ENCODE measurements at regions of chr3 and their contacts with region 1.

Region 1: GRCh38 chr3:131033480-131034080 is 6.9 kb downstream of the NEK11 start:
- DNase-seq: peak in 5 of 14 experiments; percentile 9 to 77 (median 70)
- ATAC-seq: peak; percentile 74
- H3K4me3 ChIP-seq: no peak overlapping the region
- H3K4me3 Mint-ChIP-seq: no peak overlapping the region
- H3K27ac ChIP-seq: no peak overlapping the region
- H3K27ac Mint-ChIP-seq: no peak overlapping the region
- H3K4me1 ChIP-seq: no peaks in the 10 kb centered on the region
- H3K4me1 Mint-ChIP-seq: no peaks in the 10 kb centered on the region
- H3K27me3 ChIP-seq: no peaks in the 10 kb centered on the region
- H3K27me3 Mint-ChIP-seq: no peaks in the 10 kb centered on the region
- CTCF ChIP-seq: peak; percentile 68

Region 2: DNA sequence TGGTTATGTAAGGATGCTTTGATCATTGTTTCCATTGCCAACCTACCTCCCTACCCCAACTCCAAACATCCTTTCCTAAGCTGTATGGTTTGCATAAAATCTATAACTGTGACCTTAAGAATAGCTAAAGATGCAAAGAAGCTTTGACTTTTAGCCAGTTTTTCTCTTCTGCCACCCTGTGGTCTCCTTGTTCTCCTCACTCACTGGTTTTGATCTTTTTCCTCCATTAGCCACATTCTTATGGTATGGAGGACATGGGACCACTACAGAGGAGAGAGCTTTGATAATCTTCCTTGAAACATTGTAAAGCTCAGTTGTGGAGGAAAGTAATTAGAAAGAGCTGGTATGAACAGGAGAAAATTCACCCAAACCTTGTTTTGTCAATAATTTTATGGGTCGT is 109.0 kb after region 1 on chr3:
- CTCF ChIA-PET with region 1: no interaction called
- POLR2A ChIA-PET with region 1: no interaction called
- intact Hi-C with region 1: loop called in 1 of 2 experiments (anchors 5 kb)
- DNase-seq: no peak
- ATAC-seq: no peak
- H3K4me3 ChIP-seq: no peak overlapping the region
- H3K4me3 Mint-ChIP-seq: no peak overlapping the region
- H3K27ac ChIP-seq: no peak overlapping the region
- H3K27ac Mint-ChIP-seq: no peak overlapping the region
- H3K4me1 ChIP-seq: no peaks in the 10 kb centered on the region
- H3K4me1 Mint-ChIP-seq: no peaks in the 10 kb centered on the region
- H3K27me3 ChIP-seq: no peaks in the 10 kb centered on the region
- H3K27me3 Mint-ChIP-seq: no peaks in the 10 kb centered on the region
- CTCF ChIP-seq: no peak

Region 3: GRCh38 chr3:131794766-131795388 is 761.3 kb after region 1 on chr3:
- CTCF ChIA-PET with region 1: no interaction called
- POLR2A ChIA-PET with region 1: no interaction called
- intact Hi-C with region 1: loop called (anchors 1 to 5 kb)
- DNase-seq: peak in 5 of 14 experiments; percentile 2 to 57 (median 33)
- ATAC-seq: peak; percentile 54
- H3K4me3 ChIP-seq: no peak overlapping the region
- H3K4me3 Mint-ChIP-seq: no peak overlapping the region
- H3K27ac ChIP-seq: no peak overlapping the region
- H3K27ac Mint-ChIP-seq: no peak overlapping the region
- H3K4me1 ChIP-seq: no peaks in the 10 kb centered on the region
- H3K4me1 Mint-ChIP-seq: peaks cover 14% of the 10 kb centered on the region
- H3K27me3 ChIP-seq: no peaks in the 10 kb centered on the region
- H3K27me3 Mint-ChIP-seq: peaks cover 17% of the 10 kb centered on the region
- CTCF ChIP-seq: peak; percentile 68

Region 4: DNA sequence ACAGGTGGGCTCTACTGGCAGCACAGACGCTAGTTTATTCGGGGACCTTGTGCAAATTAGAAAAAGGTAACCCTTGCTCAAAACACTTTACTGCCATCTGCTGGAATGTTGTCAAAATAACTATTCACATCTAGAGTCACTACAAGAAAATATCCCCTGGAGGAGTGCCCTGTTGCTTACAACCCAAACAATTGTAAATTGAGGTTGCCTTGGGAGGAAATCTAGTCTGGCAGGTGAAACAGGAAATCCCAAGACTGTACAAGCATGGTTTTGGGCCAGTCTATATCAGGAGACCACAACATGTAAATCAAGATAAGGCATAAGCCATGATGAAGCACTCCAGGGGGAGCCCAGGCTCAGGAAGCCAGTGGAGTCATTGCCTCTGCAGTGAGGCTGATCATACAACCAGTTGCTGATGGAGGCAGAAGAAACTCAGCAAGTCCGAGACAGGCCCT is 1146.8 kb after region 1 on chr3:
- CTCF ChIA-PET with region 1: no interaction called
- POLR2A ChIA-PET with region 1: no interaction called
- intact Hi-C with region 1: loop called in 1 of 2 experiments (anchors 2 kb)
- DNase-seq: peak in 3 of 14 experiments; percentile 37 to 42 (median 40)
- ATAC-seq: no peak
- H3K4me3 ChIP-seq: no peak overlapping the region
- H3K4me3 Mint-ChIP-seq: no peak overlapping the region
- H3K27ac ChIP-seq: no peak overlapping the region
- H3K27ac Mint-ChIP-seq: no peak overlapping the region
- H3K4me1 ChIP-seq: no peaks in the 10 kb centered on the region
- H3K4me1 Mint-ChIP-seq: peaks cover 5% of the 10 kb centered on the region
- H3K27me3 ChIP-seq: no peaks in the 10 kb centered on the region
- H3K27me3 Mint-ChIP-seq: peaks cover 12% of the 10 kb centered on the region
- CTCF ChIP-seq: peak; percentile 47

Region 5: GRCh38 chr3:132399054-132399929 is 1365.7 kb after region 1 on chr3:
- CTCF ChIA-PET with region 1: no interaction called
- POLR2A ChIA-PET with region 1: no interaction called
- intact Hi-C with region 1: loop called in 1 of 2 experiments (anchors 5 kb)
- DNase-seq: peak in 4 of 14 experiments; percentile 5 to 53 (median 44)
- ATAC-seq: peak; percentile 51
- H3K4me3 ChIP-seq: no peak overlapping the region
- H3K4me3 Mint-ChIP-seq: no peak overlapping the region
- H3K27ac ChIP-seq: no peak overlapping the region
- H3K27ac Mint-ChIP-seq: no peak overlapping the region
- H3K4me1 ChIP-seq: no peaks in the 10 kb centered on the region
- H3K4me1 Mint-ChIP-seq: no peaks in the 10 kb centered on the region
- H3K27me3 ChIP-seq: no peaks in the 10 kb centered on the region
- H3K27me3 Mint-ChIP-seq: no peaks in the 10 kb centered on the region
- CTCF ChIP-seq: peak; percentile 63